ENCODE measurements at regions of chr13 and their contacts with region 1.

Region 1: GRCh38 chr13:21476893-21477472 is 17.9 kb upstream of the ZDHHC20 start:
- DNase-seq: no peak
- H3K4me3 ChIP-seq: peak overlapping the region; percentile 47
- CTCF ChIP-seq: peak; percentile 98

Region 2: DNA sequence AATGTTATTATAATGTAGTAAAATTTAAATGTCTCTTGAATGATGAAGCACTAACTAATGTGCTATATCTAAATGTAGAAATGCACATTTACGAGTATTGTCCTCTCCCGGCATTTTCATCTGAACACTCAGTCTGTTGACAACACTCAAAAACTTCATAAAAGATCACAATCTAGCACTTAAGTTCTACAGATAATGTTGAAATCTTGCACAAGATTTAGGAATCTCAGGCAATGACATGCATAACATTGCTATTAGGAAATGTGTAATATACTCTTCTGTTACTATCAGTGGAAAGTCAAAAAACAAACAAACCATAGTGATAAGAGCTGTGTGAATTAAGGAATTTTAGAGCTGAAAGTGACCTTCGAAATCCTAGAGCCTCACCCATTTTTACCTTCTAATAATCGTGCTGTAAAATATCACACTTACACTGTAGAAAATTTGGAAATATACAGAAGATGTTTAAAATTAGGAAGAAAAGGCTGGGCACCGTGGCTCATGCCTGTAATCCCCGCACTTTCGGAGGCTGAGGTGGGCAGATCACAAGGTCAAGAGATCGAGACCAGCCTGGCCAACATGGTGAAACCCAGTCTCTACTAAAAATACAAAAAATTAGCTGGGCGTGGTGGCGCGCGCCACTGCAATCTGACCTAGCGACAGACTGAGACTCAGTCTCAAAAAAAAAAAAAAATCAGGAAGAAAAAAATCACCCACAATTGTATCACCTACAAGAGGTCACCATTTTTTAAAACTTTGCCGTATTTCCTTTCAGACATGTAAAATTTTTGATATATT is 536.7 kb before region 1 on chr13:
- CTCF ChIA-PET with region 1: interaction called, 17 read pairs
- POLR2A ChIA-PET with region 1: no interaction called
- DNase-seq: peak; percentile 21
- H3K4me3 ChIP-seq: no peak overlapping the region
- CTCF ChIP-seq: no peak

Region 3: DNA sequence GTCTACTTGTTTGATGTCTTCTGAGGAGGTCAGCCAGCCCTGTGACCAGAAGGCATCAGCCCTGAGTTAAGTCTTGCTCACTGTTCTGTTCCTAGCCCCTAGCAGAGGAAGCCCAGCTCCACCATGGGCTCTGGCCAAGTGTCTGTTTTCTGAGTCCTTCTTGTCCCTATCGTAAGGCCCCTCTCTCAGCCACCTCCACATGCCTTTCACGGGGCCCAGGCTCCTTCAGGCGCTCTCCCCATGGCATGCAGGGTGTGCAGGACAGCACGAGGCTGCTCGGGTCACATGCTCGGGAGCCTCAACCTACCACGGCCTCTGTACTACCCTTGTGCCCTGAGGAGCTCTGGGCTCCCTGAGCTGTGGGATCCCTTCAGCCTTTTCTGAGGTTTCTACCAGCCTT is 367.8 kb before region 1 on chr13:
- CTCF ChIA-PET with region 1: interaction called, 19 read pairs
- POLR2A ChIA-PET with region 1: no interaction called
- DNase-seq: no peak
- H3K4me3 ChIP-seq: no peak overlapping the region
- CTCF ChIP-seq: no peak

Region 4: GRCh38 chr13:21176220-21176982 is 300.6 kb before region 1 on chr13 and contains the starts of genes MRPL57 and SKA3:
- CTCF ChIA-PET with region 1: interaction called, 29 read pairs
- POLR2A ChIA-PET with region 1: no interaction called
- DNase-seq: peak; percentile 49
- H3K4me3 ChIP-seq: peak within 1 kb of the TSS; percentile 88
- CTCF ChIP-seq: peak; percentile 5

Region 5: DNA sequence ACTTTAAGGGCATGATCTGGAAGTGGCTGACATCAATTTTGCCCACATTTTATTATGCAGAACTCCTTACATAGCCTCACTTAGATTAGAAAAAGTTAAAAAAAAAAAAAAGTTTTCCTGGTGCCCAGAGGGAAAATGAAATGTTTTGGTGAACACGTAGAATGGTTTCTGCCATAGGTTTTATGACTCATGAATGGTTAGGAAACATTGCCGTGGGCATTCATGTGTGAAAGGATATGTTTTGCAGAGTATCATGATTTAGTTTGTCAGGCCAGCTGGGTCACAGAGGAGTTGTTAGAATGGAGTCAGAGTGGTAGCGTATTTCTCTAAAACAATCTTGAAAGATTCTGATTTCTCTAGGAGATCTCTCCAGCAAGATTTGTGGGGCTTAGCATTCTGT is 166.8 kb before region 1 on chr13:
- CTCF ChIA-PET with region 1: interaction called, 11 read pairs
- POLR2A ChIA-PET with region 1: no interaction called
- DNase-seq: no peak
- H3K4me3 ChIP-seq: no peak overlapping the region
- CTCF ChIP-seq: no peak

Region 6: DNA sequence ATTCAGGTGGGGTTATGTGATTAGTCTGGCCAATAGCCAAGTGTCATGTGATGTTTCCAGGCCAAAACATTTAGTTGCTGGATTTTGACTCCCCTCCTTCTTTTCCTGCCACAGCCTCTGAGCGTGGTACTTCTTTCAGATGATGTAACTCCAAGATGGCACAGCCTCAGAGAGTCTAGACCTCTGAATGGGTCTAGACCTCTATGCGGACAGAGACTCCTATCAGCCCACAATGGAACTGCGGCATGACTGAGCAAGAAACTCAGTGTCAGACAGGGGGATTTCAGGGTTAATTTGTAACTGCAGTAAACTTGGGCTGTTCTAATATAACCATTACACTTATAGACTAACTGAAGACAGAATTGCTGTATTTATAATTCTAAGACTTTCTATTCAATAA is 24.7 kb after region 1 on chr13:
- CTCF ChIA-PET with region 1: interaction called, 33 read pairs
- POLR2A ChIA-PET with region 1: no interaction called
- DNase-seq: no peak
- H3K4me3 ChIP-seq: no peak overlapping the region
- CTCF ChIP-seq: no peak

Region 7: GRCh38 chr13:21670883-21671619 is 194.1 kb after region 1 on chr13 and contains the start of gene FGF9:
- CTCF ChIA-PET with region 1: no interaction called
- POLR2A ChIA-PET with region 1: no interaction called
- DNase-seq: peak; percentile 3
- H3K4me3 ChIP-seq: peak within 1 kb of the TSS; percentile 59
- CTCF ChIP-seq: no peak

Measured in AG04449 (cell line).